AG04449 (cell line): ENCODE measurements at regions of chr3 and their contacts with region 1.

Region 1: DNA sequence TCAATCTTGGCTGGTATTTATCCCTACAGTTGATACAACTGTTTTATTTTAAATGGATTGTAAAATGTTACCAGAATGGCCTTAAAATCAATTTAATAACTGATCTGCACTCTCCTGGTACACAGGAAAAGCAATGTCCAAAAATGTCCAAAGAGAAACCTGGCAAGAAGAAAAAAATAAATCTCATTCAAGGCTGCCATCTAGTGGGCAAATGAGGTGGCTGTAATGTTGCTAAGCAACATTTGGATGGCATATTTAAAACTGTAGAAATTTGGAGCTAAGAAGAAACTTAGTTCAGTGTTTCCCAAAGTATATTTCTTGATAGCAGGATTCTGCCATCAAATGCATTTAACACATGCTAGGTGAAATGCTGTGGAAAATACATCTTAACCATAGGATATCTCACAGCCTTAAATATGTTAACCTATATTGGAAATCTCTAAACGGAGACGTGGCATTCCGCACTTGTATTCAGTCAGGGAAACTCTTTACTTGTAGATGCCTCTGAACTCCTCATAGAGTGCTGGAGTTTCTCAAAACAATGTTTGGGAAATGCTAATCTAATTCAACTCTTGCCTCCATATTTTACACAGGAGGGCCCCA is 216.8 kb downstream of the ERC2 start:
- DNase-seq: no peak
- H3K4me3 ChIP-seq: no peak overlapping the region
- CTCF ChIP-seq: peak; percentile 58

Region 2: GRCh38 chr3:56238299-56238698 is 13.1 kb before region 1 on chr3:
- CTCF ChIA-PET with region 1: interaction called, 43 read pairs
- POLR2A ChIA-PET with region 1: no interaction called
- DNase-seq: no peak
- H3K4me3 ChIP-seq: no peak overlapping the region
- CTCF ChIP-seq: no peak

Region 3: GRCh38 chr3:56477646-56478045 is 226.2 kb after region 1 on chr3:
- CTCF ChIA-PET with region 1: no interaction called
- POLR2A ChIA-PET with region 1: no interaction called
- DNase-seq: no peak
- H3K4me3 ChIP-seq: no peak overlapping the region
- CTCF ChIP-seq: no peak